Naive thymus-derived CD4-positive, alpha-beta T cell (primary cell): ENCODE measurements at regions of chr6 and their contacts with region 1.

Region 1: GRCh38 chr6:38570750-38571149 is 69.0 kb downstream of the BTBD9 start:
- DNase-seq: peak in 4 of 9 donors; percentile 7 to 20 (median 10)
- ATAC-seq: no peak
- H3K4me3 ChIP-seq: no peak overlapping the region
- H3K4me3 Mint-ChIP-seq: peak overlapping the region in 3 of 10 donors; percentile 9 to 77 (median 26)
- H3K27ac ChIP-seq: no peak overlapping the region
- H3K27ac Mint-ChIP-seq: peak overlapping the region in 6 of 9 donors; percentile 68 to 95 (median 89)
- H3K4me1 ChIP-seq: peaks cover 7 to 8% of the 10 kb centered on the region in 2 donors
- H3K4me1 Mint-ChIP-seq: peaks cover 19 to 32% (median 24%) of the 10 kb centered on the region in 7 donors
- H3K27me3 ChIP-seq: no peaks in the 10 kb centered on the region
- H3K27me3 Mint-ChIP-seq: peaks cover 0 to 2% (median 0%) of the 10 kb centered on the region in 5 donors

Region 2: DNA sequence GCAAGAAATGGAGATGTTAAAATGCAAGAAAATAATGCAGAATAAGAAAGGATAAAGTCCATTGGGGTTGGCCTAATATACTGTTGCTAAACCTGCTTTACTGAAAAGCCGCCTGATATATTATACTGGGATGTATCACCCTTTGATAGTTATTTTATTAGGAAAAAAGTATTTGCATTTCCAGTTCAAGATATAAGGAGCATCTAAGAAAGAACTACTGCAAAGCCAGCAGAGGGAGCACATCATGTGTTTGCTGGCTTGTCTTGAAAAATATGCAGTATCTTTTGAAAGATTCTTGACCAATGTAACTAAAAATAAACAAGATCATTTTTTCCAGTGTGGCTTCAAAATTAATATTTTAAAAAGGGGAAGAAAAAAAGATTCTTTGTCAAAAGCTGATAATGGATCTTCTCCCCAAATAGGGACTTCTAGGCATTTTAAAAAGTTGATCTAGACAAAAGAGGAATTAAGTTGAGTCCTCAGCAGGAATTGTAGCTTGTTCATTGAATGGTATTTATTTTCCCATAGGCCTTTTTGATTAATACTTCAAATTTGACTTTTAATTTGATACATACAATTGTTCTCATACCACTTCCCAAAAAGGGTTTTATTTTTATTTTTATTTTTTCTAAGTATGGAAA is 536.4 kb before region 1 on chr6:
- CTCF ChIA-PET with region 1: interaction called, 3 read pairs
- POLR2A ChIA-PET with region 1: no interaction called
- intact Hi-C with region 1: loop called in 1 of 2 experiments (anchors 1 kb)
- DNase-seq: peak in 1 of 9 donors; percentile 8
- ATAC-seq: no peak
- H3K4me3 ChIP-seq: no peak overlapping the region
- H3K4me3 Mint-ChIP-seq: peak overlapping the region in 6 of 10 donors; percentile 8 to 54 (median 23)
- H3K27ac ChIP-seq: no peak overlapping the region
- H3K27ac Mint-ChIP-seq: peak overlapping the region in 3 of 9 donors; percentile 29 to 57 (median 52)
- H3K4me1 ChIP-seq: peaks cover 0 to 12% of the 10 kb centered on the region in 2 donors
- H3K4me1 Mint-ChIP-seq: peaks cover 22 to 82% (median 61%) of the 10 kb centered on the region in 7 donors
- H3K27me3 ChIP-seq: no peaks in the 10 kb centered on the region
- H3K27me3 Mint-ChIP-seq: no peaks in the 10 kb centered on the region

Region 3: DNA sequence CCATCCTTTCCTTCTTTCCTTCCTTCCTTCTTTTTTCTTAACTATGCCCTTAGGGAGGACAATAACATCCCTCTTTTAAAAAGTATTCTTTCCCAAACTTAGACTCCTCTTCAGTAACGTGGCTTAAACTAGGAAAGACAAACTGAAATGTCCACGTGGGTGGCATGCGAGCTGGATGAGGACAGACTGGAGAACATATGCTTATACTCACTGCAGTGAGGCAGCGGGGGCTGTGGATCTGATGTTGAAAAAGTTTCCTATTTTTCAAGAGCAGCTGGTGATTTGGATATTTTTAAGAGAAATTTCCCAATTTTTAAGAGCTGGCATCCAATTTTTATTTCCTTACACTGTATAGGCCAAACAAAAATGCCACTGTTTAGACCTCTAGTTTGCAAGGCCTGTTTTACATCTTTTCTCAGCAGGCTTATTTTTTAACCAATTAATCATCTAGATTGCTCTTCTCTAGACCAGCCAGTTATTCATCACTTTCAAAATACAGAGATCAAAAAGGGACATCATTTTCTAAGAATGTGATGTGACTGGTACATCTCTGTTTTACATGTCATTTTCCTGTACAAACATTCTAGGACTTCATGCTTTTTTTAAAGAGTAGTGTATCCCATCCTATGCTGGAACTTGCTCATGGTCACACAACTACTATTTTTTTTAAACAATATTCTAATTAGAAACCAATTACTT is 157.5 kb before region 1 on chr6:
- CTCF ChIA-PET with region 1: no interaction called
- POLR2A ChIA-PET with region 1: no interaction called
- intact Hi-C with region 1: no loop called
- DNase-seq: no peak
- ATAC-seq: no peak
- H3K4me3 ChIP-seq: no peak overlapping the region
- H3K4me3 Mint-ChIP-seq: no peak overlapping the region
- H3K27ac ChIP-seq: no peak overlapping the region
- H3K27ac Mint-ChIP-seq: no peak overlapping the region
- H3K4me1 ChIP-seq: no peaks in the 10 kb centered on the region
- H3K4me1 Mint-ChIP-seq: peaks cover 0 to 20% (median 0%) of the 10 kb centered on the region in 7 donors
- H3K27me3 ChIP-seq: no peaks in the 10 kb centered on the region
- H3K27me3 Mint-ChIP-seq: no peaks in the 10 kb centered on the region

Region 4: DNA sequence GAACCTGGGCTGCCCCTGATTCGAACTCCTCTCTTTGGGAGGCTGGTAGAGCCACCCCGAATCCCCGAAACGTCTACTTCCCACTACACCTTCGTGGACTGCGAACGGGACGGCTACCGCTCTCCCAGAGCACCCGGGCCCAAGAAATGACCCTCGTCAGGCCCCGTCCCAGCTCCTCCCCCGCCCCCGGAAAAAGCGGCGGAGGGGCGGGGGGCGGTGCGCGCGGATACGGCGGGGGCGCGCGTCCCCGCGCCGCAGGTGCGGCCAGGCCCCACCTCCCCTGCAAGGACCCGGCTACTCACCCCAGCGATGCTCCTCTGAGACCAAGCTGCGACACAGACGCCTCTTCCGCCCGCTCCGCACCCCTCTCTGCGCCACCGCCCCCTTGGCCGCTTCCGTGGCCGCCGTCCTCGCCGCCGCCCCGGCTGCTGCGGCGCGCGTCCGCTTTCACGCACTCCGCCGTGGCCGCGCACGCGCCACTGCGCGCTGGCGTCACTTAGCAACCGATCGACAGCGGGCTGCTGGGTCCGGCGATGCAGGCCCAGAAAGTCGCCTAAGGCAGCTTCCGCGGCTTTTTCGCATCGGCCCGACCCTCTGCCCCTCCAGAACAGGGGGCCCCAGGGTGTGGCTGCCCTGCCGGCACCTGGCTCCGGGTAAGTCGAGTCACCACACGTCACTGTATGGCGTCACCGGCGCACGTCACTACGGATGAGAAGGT is 68.9 kb after region 1 on chr6 and contains the start of gene BTBD9:
- CTCF ChIA-PET with region 1: no interaction called
- POLR2A ChIA-PET with region 1: interaction called, 10 read pairs
- intact Hi-C with region 1: loop called (anchors 1 kb)
- DNase-seq: peak; percentile 83 to 92 (median 90)
- ATAC-seq: peak; percentile 87
- H3K4me3 ChIP-seq: peak within 1 kb of the TSS; percentile 90
- H3K4me3 Mint-ChIP-seq: peak within 1 kb of the TSS; percentile 74 to 94 (median 90)
- H3K27ac ChIP-seq: peak within 1 kb of the TSS; percentile 94
- H3K27ac Mint-ChIP-seq: peak within 1 kb of the TSS; percentile 88 to 96 (median 91)
- H3K4me1 ChIP-seq: peaks cover 16 to 22% of the 10 kb centered on the region in 2 donors
- H3K4me1 Mint-ChIP-seq: peaks cover 40 to 65% (median 57%) of the 10 kb centered on the region in 7 donors
- H3K27me3 ChIP-seq: no peaks in the 10 kb centered on the region
- H3K27me3 Mint-ChIP-seq: no peaks in the 10 kb centered on the region
- total RNA-seq, gene BTBD9: 20.6 to 58.8 (median 43.6) TPM